Calu3 (cell line): ENCODE measurements at regions of chr5 and their contacts with region 1.

Region 1: DNA sequence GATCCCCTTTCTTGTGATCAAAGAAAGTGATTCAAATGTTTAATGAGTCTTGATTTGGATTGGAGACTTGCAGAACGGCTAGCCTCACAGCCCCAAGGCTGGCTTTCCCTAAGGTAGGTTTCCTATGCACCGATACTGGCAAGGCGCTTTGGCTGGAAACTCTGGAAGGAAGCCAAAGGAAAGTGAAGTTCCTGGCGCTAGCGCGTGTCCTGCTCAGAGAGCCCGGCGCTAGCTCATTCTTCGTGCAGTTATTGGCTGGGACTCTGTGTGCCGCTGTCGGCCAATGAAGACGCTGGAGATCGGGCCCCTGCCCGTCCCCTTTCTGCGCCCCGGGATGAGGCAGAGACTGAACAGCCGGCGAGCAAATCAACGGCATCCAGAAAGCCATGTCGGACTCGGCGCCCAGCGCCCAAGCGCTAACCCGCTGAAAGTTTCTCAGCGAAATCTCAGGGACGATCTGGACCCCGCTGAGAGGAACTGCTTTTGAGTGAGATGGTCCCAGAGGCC is at the start of gene PCDHGC3:
- DNase-seq: peak; percentile 95
- H3K4me3 Mint-ChIP-seq: peak within 1 kb of the TSS; percentile 91
- H3K27ac Mint-ChIP-seq: peak within 1 kb of the TSS; percentile 80
- H3K4me1 Mint-ChIP-seq: peaks cover 10% of the 10 kb centered on the region
- H3K27me3 Mint-ChIP-seq: no peaks in the 10 kb centered on the region
- CTCF ChIP-seq: no peak
- total RNA-seq, gene PCDHGC3: 49.4 and 73.0 TPM in 2 replicates

Region 2: DNA sequence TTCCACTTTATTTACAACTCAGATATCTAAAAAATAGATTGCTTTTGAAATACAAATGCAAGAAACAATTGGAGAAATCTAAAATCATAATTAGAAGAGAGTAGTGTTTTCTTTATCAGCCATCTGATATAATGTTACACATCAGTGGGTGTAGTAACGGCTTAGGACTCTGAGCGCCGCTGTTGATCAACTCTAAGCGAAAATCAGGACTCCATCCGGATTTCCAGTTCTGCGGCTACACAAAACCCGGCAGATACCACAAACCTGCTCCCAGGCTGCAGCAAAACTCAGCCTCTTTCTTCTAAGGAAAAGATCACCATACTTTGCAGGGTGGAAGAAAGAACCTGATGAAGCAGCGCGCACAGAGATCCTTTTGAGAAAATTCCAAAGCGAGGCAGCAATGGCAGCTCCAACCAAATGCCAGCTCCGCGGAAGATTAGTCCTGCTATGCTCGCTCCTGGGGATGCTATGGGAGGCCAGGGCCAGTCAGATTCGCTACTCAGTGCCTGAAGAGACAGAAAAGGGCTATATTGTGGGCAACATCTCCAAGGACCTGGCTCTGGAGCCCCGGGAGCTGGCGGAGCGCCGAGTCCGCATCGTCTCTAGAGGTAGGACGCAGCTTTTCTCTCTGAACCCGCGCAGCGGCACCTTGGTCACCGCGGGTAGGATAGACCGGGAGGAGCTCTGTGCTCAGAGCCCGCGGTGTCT is 73.0 kb before region 1 on chr5 and contains the start of gene PCDHGA9:
- CTCF ChIA-PET with region 1: interaction called, 7 read pairs
- intact Hi-C with region 1: loop called (anchors 5 kb)
- DNase-seq: peak; percentile 73
- H3K4me3 Mint-ChIP-seq: peak within 1 kb of the TSS; percentile 95
- H3K27ac Mint-ChIP-seq: peak within 1 kb of the TSS; percentile 68
- H3K4me1 Mint-ChIP-seq: peaks cover 17% of the 10 kb centered on the region
- H3K27me3 Mint-ChIP-seq: no peaks in the 10 kb centered on the region
- CTCF ChIP-seq: peak; percentile 83
- total RNA-seq, gene PCDHGA9: 16.0 and 18.1 TPM in 2 replicates

Region 3: GRCh38 chr5:141493500-141494422 is 18.1 kb after region 1 on chr5:
- CTCF ChIA-PET with region 1: interaction called, 5 read pairs
- intact Hi-C with region 1: loop called (anchors 1 kb)
- DNase-seq: no peak
- H3K4me3 Mint-ChIP-seq: no peak overlapping the region
- H3K27ac Mint-ChIP-seq: no peak overlapping the region
- H3K4me1 Mint-ChIP-seq: no peaks in the 10 kb centered on the region
- H3K27me3 Mint-ChIP-seq: no peaks in the 10 kb centered on the region
- CTCF ChIP-seq: no peak

Region 4: GRCh38 chr5:141570655-141571054 is 95.0 kb after region 1 on chr5:
- CTCF ChIA-PET with region 1: no interaction called
- intact Hi-C with region 1: no loop called
- DNase-seq: no peak
- H3K4me3 Mint-ChIP-seq: no peak overlapping the region
- H3K27ac Mint-ChIP-seq: no peak overlapping the region
- H3K4me1 Mint-ChIP-seq: peaks cover 10% of the 10 kb centered on the region
- H3K27me3 Mint-ChIP-seq: no peaks in the 10 kb centered on the region
- CTCF ChIP-seq: no peak

Region 5: GRCh38 chr5:141677415-141677814 is 201.7 kb after region 1 on chr5:
- CTCF ChIA-PET with region 1: no interaction called
- intact Hi-C with region 1: no loop called
- DNase-seq: no peak
- H3K4me3 Mint-ChIP-seq: no peak overlapping the region
- H3K27ac Mint-ChIP-seq: no peak overlapping the region
- H3K4me1 Mint-ChIP-seq: peaks cover 12% of the 10 kb centered on the region
- H3K27me3 Mint-ChIP-seq: no peaks in the 10 kb centered on the region
- CTCF ChIP-seq: peak; percentile 36

Region 6: DNA sequence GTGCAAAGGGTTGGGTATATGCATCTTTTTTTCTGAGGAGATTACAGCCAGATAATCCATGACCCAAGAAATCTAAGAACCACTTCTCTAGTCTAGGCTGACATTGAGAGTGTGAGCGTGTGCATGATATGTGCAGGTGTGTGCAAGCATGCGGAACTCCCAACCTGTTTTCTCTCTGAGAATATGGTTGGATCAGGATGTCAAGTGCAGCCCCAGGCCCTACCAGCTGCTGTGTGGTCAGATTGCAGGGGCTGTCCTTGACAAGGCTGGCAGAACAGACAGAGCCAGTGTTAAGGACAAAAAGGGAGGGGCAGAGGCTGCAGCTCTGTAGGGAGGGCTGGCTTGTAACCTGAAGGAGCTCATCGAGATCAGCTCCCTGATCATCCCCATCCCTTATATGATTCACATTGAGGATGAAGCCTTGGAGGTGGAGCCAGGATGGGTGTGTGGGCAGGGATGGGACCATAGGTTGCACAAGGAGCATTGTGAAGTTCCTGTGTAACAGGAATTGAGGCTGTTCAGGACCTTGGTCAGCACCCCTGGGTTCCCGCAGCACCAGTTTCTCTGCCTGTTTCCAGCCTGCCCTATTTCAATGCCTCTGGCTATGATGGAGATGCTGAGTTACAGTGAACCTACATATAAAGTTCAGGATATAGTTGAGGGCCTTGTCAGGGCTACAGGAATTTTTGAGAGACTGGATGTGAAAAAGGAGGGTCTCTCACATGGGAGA is 259.0 kb after region 1 on chr5:
- CTCF ChIA-PET with region 1: no interaction called
- intact Hi-C with region 1: no loop called
- DNase-seq: peak; percentile 82
- H3K4me3 Mint-ChIP-seq: no peak overlapping the region
- H3K27ac Mint-ChIP-seq: no peak overlapping the region
- H3K4me1 Mint-ChIP-seq: no peaks in the 10 kb centered on the region
- H3K27me3 Mint-ChIP-seq: peaks cover 100% of the 10 kb centered on the region
- CTCF ChIP-seq: no peak